ENCODE measurements at regions of chr3 and their contacts with region 1.

Region 1: GRCh38 chr3:120198305-120198878 is 86.6 kb downstream of the GPR156 start:
- DNase-seq: peak; percentile 13
- H3K4me3 ChIP-seq: no peak overlapping the region
- H3K27ac ChIP-seq: no peak overlapping the region
- H3K4me1 ChIP-seq: no peaks in the 10 kb centered on the region
- CTCF ChIP-seq: peak; percentile 63

Region 2: GRCh38 chr3:119819806-119820205 is 378.6 kb before region 1 on chr3:
- CTCF ChIA-PET with region 1: no interaction called
- POLR2A ChIA-PET with region 1: no interaction called
- intact Hi-C with region 1: loop called (anchors 10 kb)
- DNase-seq: no peak
- H3K4me3 ChIP-seq: no peak overlapping the region
- H3K27ac ChIP-seq: no peak overlapping the region
- H3K4me1 ChIP-seq: no peaks in the 10 kb centered on the region
- CTCF ChIP-seq: no peak